ENCODE measurements at regions of chr2 and their contacts with region 1.

Region 1: DNA sequence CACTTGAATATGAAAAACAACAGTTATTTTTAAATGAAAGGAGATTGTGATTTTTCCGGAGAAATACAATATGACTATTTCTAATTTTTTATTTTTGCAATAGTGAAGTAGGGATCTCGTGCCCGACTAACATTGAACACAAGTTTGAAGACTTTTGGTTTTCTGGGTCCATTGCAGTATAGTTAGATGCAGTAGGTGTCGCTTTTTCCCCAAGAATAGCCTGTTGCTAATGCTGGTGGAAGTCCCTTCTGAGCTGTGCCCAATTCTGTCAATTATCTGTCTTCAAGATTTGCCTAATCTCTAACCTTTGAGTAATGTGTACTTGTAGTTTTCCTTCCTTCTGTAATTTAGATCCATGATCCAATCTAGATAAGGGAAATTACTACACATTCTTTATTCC is 36.5 kb downstream of the SEMA4F start:
- H3K4me3 Mint-ChIP-seq: no peak overlapping the region
- H3K27ac Mint-ChIP-seq: no peak overlapping the region
- H3K4me1 Mint-ChIP-seq: peaks cover 10% of the 10 kb centered on the region
- H3K27me3 Mint-ChIP-seq: peaks cover 8% of the 10 kb centered on the region

Region 2: GRCh38 chr2:74573747-74574562 is 116.6 kb before region 1 on chr2:
- intact Hi-C with region 1: no loop called
- H3K4me3 Mint-ChIP-seq: peak overlapping the region; percentile 58
- H3K27ac Mint-ChIP-seq: peak overlapping the region; percentile 90
- H3K4me1 Mint-ChIP-seq: peaks cover 61% of the 10 kb centered on the region
- H3K27me3 Mint-ChIP-seq: no peaks in the 10 kb centered on the region

Region 3: DNA sequence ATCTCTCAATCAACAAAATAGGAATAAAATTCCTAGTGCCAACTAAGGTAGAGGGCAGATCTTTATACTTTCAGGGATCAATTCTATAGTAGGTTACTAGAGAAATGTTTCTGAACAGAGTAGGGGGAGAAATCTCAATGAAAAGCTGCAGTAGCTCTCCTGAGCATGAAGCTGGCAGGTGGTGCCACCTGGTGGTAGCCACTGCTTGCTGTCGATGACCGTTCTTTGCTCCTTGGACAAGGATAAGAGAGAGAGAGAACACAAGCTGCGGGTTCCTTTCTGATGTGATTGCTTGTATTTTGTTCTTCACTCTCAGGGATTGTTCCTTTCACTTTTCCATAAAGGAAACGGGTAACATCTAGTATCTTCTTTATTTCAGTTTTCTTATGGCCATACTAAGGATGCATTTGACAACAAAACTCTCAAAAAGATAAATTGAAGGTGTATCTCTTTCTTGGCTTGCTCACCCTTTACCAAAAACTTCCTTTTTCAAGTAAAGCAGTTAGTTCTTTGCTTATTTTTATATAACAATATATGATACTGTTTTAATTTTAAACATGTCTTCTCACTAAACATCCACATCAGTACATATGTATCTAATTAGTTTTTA is 937.4 kb after region 1 on chr2:
- intact Hi-C with region 1: loop called (anchors 10 kb)
- H3K4me3 Mint-ChIP-seq: no peak overlapping the region
- H3K27ac Mint-ChIP-seq: no peak overlapping the region
- H3K4me1 Mint-ChIP-seq: no peaks in the 10 kb centered on the region
- H3K27me3 Mint-ChIP-seq: peaks cover 10% of the 10 kb centered on the region